Posterior cingulate gyrus (tissue), 11 donors: ENCODE measurements at regions of chr12 and their contacts with region 1.

Region 1: DNA sequence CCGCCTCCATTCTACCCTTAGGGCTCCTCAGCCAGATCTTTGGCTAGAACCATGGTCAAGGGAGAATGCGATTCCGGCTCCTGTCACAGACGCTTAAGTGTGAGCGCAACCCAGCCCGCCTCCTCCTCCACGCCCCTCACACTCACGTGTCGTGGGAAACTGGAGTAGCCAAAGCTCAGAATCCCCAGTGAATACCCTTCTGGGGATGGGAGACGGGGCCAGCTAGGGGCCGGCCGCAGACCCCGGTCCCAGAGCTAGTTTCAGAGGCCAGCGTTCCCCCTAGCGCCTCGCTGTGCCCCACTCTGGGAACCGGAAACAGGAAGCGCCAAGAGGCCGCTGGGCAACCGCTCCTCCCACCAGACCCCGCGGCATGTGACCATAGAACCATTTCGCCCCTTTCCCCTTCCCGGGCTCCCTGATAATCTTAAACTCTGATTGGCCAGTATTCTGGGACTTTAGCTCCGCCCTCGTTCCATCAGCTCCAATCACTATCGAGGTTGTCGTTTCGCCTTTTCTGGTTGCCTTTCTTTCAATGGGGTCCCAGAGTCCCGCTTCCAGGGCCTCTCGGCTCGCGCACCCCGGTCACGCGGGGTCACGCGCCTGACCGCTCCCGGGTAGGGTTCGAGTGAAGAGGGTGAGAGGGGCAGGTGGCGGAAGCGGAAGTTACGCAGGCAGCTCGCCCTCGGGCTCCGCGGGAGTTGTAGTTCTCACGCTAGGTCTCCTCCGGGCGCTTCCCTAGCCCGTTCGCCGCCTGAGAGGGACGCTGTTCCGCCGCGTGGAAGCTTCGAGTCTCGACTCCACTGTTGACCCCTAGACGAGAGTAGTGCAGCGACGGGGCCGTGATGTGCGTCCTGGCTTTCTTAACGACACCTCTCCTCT is at the start of gene M6PR:
- DNase-seq: peak; percentile 92 to 99 (median 96)

Region 2: GRCh38 chr12:8697476-8698131 is 252.0 kb before region 1 on chr12 and contains the start of gene RIMKLB:
- intact Hi-C with region 1: loop called (anchors 5 kb)
- DNase-seq: peak; percentile 51 to 95 (median 78)

Region 3: DNA sequence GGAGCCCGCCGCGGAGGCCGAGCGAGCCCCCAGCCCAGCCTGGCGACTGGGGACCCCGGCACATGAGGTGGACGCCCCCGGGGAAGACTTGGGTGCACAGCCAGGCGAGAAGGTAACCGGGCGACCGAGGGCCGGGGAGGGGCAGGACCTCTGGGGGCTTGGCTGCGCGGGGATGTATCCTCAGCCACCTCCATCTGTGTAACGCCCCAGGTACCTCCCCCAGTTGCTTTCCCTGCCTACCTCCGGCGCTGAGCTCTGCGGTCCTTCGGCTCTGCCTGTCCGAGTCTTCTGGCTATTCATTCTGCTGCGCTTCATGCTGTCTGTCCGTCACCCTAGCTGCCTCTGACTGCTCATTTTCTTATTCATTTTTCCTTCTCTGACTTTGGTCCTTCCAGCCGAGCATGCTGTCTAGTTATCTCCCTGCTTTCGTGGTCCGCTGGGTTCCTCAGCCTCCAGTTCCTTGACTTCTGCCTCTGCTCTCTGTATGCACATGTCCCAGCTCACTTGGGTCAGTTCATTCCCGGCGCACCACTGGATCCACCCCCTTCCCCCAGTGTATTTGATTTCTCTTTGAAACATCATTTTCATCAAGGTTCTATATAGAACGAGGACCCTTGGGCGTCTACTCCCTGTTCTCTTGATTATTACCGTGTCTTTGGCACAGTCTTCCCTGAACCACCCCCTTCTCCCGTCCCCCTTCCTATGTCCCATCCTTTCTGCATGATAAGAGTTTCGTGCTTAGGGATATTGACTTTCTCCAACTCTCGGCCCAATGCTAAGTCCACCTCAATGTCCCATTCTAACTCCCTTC is 34.7 kb before region 1 on chr12:
- intact Hi-C with region 1: loop called (anchors 2 kb)
- DNase-seq: peak in 9 of 10 donors; percentile 19 to 91 (median 38)

Region 4: GRCh38 chr12:9039397-9039977 is 89.9 kb after region 1 on chr12:
- intact Hi-C with region 1: loop called (anchors 2 kb)
- DNase-seq: no peak